Activated naive CD4-positive, alpha-beta T cell treated with anti-CD3 and anti-CD28 coated beads for 36 hours (primary cell): ENCODE measurements at regions of chr7 and their contacts with region 1.

Region 1: GRCh38 chr7:92708111-92709042 is 118.2 kb upstream of the FAM133B start:
- DNase-seq: no peak
- H3K4me3 Mint-ChIP-seq: no peak overlapping the region
- H3K27ac Mint-ChIP-seq: peak overlapping the region; percentile 89
- H3K4me1 Mint-ChIP-seq: peaks cover 52% of the 10 kb centered on the region
- H3K27me3 Mint-ChIP-seq: no peaks in the 10 kb centered on the region

Region 2: DNA sequence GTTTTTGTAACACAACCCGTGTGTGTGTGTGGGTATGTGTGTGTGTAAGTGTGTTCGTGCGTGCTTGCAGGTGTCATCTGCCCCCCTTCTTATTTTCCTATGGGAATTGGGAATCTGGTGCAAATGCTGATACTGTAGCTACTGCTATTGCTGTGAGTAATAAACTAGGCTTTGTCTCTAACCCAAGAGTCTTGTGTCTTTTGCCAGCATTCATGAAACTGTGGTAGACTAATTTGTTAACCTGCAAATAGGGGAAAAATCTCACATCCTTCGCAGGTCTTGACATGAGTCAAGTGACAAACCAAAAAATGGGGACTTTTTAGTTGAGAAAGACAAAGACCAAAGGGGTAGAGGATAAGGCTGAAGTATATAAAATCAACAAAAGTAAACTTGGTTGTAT is 60.3 kb before region 1 on chr7:
- CTCF ChIA-PET with region 1: interaction called, 4 read pairs
- intact Hi-C with region 1: loop called (anchors 1 kb)
- DNase-seq: no peak
- H3K4me3 Mint-ChIP-seq: no peak overlapping the region
- H3K27ac Mint-ChIP-seq: peak overlapping the region; percentile 88
- H3K4me1 Mint-ChIP-seq: peaks cover 89% of the 10 kb centered on the region
- H3K27me3 Mint-ChIP-seq: no peaks in the 10 kb centered on the region

Region 3: DNA sequence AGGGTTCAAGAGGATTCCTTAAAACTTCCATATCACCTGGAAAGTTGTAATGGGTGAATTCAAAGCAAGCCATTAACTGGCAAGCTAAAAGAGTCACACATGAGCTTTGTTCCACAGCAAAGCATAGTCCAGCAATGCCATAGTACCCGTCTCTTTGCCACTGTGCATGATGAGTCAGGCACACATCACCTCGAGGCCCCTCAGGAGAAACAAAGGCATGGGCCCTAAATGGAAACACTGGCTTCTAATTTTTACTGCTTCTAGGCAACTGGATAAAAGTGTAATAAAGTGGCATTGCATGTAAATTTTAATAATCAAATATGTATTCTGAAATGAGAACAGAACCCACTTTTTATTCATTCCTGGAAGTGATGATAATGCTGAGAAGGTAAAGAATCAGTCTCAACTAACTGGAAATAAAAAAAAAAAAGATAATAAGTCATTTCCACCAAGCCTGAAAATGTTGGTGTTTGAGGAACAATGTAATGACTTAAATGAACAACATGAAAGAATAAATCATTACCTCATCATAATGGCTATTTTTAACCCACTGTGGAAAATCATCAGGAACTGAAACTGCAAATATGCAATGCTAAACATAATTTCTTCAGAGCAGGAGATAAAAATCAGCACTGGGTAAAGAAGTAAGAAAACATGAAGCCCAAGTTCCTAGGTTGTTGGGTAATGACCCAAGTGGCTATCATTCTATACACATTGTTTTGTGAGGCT is 23.1 kb after region 1 on chr7:
- CTCF ChIA-PET with region 1: interaction called, 6 read pairs
- intact Hi-C with region 1: loop called (anchors 1 kb)
- DNase-seq: peak; percentile 66
- H3K4me3 Mint-ChIP-seq: peak overlapping the region; percentile 9
- H3K27ac Mint-ChIP-seq: peak overlapping the region; percentile 95
- H3K4me1 Mint-ChIP-seq: peaks cover 64% of the 10 kb centered on the region
- H3K27me3 Mint-ChIP-seq: no peaks in the 10 kb centered on the region

Region 4: DNA sequence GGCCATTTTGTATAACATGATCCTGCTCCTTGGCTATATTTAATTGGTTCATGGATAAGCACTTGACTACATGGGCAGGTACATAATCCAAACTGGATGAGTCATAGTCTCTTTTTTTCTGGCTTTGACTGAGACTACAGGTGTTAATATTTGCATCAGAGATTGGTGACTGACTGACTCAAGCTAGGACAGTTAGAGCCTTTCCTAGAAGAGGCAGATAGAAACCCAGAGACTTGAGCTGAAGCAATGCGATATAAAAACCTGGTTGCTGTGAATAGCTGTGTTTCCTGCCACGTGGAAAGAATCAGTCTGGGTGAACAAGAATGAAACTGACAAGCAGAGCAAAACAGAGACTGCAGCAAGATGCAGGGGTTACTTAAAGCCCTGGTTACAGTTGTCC is 328.4 kb after region 1 on chr7:
- CTCF ChIA-PET with region 1: no interaction called
- intact Hi-C with region 1: loop called (anchors 1 kb)
- DNase-seq: peak; percentile 74
- H3K4me3 Mint-ChIP-seq: no peak overlapping the region
- H3K27ac Mint-ChIP-seq: peak overlapping the region; percentile 59
- H3K4me1 Mint-ChIP-seq: peaks cover 22% of the 10 kb centered on the region
- H3K27me3 Mint-ChIP-seq: no peaks in the 10 kb centered on the region